Tibial artery (tissue), 4 donors: ENCODE measurements at regions of chr2 and their contacts with region 1.

Region 1: DNA sequence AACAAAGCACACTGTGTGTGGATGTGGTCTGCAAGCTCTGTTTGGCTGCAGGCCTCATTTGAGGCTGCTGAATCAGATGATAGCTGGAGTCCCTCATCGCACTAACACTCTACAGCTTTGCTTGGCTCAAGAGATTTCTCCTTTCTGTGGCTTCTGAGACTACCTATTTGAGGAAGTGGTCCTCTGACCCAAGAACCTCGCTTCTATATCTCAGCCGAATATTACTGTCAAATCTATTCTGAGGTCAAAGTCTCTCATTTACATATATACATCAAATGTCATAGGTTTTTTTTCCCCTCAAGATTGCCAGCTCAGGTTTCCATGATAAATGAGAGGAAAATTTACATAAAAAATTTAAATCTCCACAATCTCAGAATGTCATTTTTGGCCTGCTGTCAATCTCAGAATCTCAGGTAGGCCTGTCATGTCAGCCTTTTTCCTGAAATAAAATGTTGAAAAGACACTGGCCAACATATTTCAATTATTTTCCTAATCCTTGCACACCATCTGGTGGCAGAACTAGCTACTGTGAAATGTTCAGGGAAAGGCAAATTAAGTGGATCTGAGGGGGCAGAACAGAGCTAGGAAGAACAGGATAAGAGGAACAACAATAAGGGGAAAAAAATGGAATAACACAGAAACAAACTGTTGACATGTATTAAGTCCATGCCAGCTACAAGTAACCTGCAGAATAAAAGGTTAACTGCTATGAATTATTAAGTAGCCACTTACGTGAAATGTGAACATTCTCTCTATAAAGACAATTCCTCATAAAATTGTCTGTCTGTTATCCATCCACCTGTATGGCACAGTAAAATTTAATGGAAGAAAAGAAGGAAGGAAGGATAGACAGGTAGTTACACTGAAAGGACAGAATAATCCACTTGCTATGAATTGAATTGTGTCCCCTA is 39.3 kb downstream of the AP1S3 start:
- DNase-seq: no peak
- H3K4me3 ChIP-seq: no peak overlapping the region
- H3K27ac ChIP-seq: no peak overlapping the region
- H3K4me1 ChIP-seq: peaks cover 0 to 17% (median 1%) of the 10 kb centered on the region in 4 donors
- H3K27me3 ChIP-seq: no peaks in the 10 kb centered on the region
- CTCF ChIP-seq: peak; percentile 63 to 84

Region 2: GRCh38 chr2:222969491-222969890 is 828.6 kb before region 1 on chr2:
- intact Hi-C with region 1: loop called (anchors 2 kb)
- DNase-seq: no peak
- H3K4me3 ChIP-seq: no peak overlapping the region
- H3K27ac ChIP-seq: no peak overlapping the region
- H3K4me1 ChIP-seq: peaks cover 0 to 8% (median 0%) of the 10 kb centered on the region in 4 donors
- H3K27me3 ChIP-seq: no peaks in the 10 kb centered on the region
- CTCF ChIP-seq: no peak

Region 3: DNA sequence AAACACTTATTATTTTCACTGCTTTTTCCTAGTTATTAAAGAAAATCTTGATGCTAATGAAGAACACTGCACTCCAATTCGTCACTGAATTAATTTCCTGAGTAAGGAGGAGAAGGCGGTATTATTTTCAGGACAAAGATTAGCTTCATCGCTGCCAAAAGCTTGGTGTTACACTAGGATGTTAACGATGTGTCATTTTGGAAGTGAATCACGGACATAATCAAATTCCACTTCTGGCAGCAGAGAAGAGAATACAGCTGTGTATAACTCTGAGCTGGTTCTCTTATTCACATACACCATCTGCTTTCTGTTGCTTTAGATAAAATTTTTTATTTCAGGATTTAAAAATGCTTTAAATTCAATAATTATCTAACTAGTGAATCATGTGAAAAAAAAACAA is 270.0 kb before region 1 on chr2:
- intact Hi-C with region 1: no loop called
- DNase-seq: no peak
- H3K4me3 ChIP-seq: no peak overlapping the region
- H3K27ac ChIP-seq: no peak overlapping the region
- H3K4me1 ChIP-seq: peaks cover 0 to 6% (median 0%) of the 10 kb centered on the region in 4 donors
- H3K27me3 ChIP-seq: no peaks in the 10 kb centered on the region
- CTCF ChIP-seq: no peak

Region 4: GRCh38 chr2:223884399-223884798 is 86.3 kb after region 1 on chr2:
- intact Hi-C with region 1: no loop called
- DNase-seq: no peak
- H3K4me3 ChIP-seq: no peak overlapping the region
- H3K27ac ChIP-seq: no peak overlapping the region
- H3K4me1 ChIP-seq: peaks cover 0 to 3% (median 0%) of the 10 kb centered on the region in 4 donors
- H3K27me3 ChIP-seq: no peaks in the 10 kb centered on the region
- CTCF ChIP-seq: no peak